HEK293 (cell line): ENCODE measurements at regions of chr16 and their contacts with region 1.

Region 1: DNA sequence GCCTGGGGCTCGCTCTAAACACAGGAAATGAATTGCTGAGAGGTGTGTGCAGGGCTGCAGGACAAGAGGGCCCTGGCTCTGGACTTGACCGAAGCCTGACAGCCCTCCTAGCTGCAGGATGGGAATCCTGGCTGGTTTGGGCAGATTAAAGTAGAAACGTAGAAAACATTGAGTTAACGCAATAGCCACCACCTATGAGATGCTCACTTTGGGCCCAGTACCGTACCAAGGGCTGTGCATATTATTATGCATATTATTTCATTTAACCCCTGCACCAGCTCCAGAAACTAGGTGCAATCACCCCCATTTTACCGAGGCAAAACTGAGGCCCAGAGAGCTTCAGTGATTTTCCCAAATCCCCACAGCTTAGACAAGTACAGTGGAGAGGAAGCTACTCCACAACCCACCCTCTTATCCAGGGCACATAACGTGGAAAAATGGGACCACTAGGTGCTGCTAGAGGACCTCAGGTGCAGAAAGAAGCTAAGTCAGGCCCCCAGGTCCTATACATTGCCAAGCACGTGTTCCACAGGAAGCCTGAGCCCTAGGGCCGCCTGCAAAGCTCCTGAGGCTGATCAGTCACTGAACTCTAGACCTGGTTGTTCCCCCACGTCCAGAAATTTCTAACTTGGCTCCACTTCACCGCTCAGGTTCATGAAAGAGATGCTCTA is 79.2 kb downstream of the MYH11 start:
- H3K4me3 ChIP-seq: no peak overlapping the region
- H3K27ac ChIP-seq: no peak overlapping the region
- H3K4me1 ChIP-seq: no peaks in the 10 kb centered on the region
- CTCF ChIP-seq: peak; percentile 89

Region 2: GRCh38 chr16:15415411-15416037 is 362.1 kb before region 1 on chr16:
- CTCF ChIA-PET with region 1: no interaction called
- POLR2A ChIA-PET with region 1: no interaction called
- H3K4me3 ChIP-seq: no peak overlapping the region
- H3K27ac ChIP-seq: no peak overlapping the region
- H3K4me1 ChIP-seq: no peaks in the 10 kb centered on the region
- CTCF ChIP-seq: no peak

Region 3: DNA sequence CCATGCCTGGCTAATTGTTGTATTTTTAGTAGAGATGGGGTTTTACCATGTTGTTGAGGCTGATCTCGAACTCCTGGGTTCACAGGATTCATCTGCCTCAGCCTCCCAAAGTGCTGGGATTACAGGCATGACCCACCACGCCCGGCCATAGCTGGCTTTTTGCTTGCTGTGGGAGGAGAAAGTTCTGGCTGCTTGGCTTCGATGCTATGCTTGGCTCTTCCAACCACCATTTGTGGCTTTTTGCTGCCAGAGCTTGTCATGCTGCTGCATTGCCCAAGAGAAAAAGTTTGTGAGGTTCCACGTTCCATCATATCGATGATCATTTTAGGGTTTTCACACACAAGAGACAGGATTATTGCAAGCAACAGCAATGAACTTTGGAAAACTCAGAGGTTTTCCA is 327.0 kb before region 1 on chr16:
- CTCF ChIA-PET with region 1: no interaction called
- POLR2A ChIA-PET with region 1: no interaction called
- H3K4me3 ChIP-seq: no peak overlapping the region
- H3K27ac ChIP-seq: no peak overlapping the region
- H3K4me1 ChIP-seq: no peaks in the 10 kb centered on the region
- CTCF ChIP-seq: no peak

Region 4: DNA sequence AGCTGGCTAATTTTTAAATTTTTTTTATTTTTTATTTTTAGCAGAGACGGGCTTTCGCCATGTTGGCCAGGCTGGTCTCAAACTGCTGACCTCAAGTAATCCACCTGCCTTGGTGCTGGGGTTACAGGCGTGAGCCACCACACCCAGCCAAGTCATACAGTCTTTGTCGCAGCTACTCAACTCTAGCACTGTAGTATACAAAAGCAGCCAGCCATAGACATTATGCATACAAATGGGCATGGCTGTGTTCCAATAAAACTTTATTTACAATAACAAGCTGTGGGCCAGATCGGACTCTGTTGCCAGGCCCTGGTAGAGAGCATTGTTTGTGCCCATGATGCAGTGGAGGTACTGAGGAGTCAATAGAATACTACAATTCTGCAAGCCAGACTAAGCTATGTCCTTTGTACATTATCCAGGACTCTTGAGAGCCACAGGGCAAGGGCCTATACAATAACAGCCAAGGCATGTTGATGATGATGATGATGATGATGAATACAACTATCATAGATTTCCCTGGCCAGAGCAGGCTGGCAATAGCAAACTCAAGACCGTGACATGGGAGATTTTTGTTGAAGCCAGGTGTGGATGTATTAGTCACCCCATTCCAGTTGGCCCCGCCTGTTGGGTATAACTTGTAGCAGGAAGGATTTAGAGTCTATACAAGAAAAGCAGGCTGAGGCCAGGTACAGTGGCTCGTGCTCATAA is 22.7 kb before region 1 on chr16:
- CTCF ChIA-PET with region 1: interaction called, 10 read pairs
- POLR2A ChIA-PET with region 1: no interaction called
- H3K4me3 ChIP-seq: no peak overlapping the region
- H3K27ac ChIP-seq: no peak overlapping the region
- H3K4me1 ChIP-seq: no peaks in the 10 kb centered on the region
- CTCF ChIP-seq: no peak

Region 5: GRCh38 chr16:15822957-15823356 is 45.3 kb after region 1 on chr16:
- CTCF ChIA-PET with region 1: interaction called, 59 read pairs
- POLR2A ChIA-PET with region 1: interaction called, 3 read pairs
- H3K4me3 ChIP-seq: no peak overlapping the region
- H3K27ac ChIP-seq: no peak overlapping the region
- H3K4me1 ChIP-seq: no peaks in the 10 kb centered on the region
- CTCF ChIP-seq: no peak

Region 6: GRCh38 chr16:15861996-15862395 is 84.3 kb after region 1 on chr16:
- CTCF ChIA-PET with region 1: no interaction called
- POLR2A ChIA-PET with region 1: no interaction called
- H3K4me3 ChIP-seq: no peak overlapping the region
- H3K27ac ChIP-seq: no peak overlapping the region
- H3K4me1 ChIP-seq: 0 out of 2 replicates have a peak, but pooled peaks cover 2% of the 10 kb centered on the region
- CTCF ChIP-seq: no peak

Region 7: GRCh38 chr16:15874745-15875314 is 97.2 kb after region 1 on chr16:
- CTCF ChIA-PET with region 1: interaction called, 11 read pairs
- POLR2A ChIA-PET with region 1: no interaction called
- H3K4me3 ChIP-seq: no peak overlapping the region
- H3K27ac ChIP-seq: no peak overlapping the region
- H3K4me1 ChIP-seq: no peaks in the 10 kb centered on the region
- CTCF ChIP-seq: peak; percentile 29; the same call in 1 of the 2 replicates

Region 8: DNA sequence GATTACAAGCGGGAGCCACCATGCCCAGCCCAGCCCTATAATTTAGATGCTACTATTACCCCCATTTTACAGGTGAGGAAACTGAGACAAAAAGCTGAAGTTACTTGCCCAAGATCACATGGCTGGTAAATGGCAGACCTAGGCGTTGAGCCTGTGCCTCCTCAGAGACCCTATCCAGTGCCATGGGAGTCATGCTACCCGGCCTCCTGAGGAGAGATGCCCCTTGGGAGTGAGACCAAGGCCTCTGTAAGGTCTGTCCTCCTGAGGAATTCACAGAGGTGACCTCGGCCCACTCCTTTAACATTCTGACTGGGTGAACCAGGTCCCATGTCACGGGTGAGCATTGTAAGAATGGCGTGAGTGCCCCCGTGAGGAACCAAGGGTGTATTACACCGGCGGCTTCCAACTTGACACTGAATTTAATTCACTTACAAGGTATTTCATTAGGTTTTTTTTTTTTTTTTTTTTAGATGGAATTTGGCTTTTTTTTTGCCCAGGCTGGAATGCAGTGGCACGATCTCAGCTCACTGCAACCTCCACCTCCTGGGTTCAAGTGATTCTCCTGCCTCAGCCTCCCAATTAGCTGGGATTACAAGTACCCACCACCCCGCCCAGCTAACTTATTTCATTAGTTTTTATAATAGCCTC is 349.9 kb after region 1 on chr16:
- CTCF ChIA-PET with region 1: interaction called, 11 read pairs
- POLR2A ChIA-PET with region 1: interaction called, 3 read pairs
- H3K4me3 ChIP-seq: no peak overlapping the region
- H3K27ac ChIP-seq: no peak overlapping the region
- H3K4me1 ChIP-seq: no peaks in the 10 kb centered on the region
- CTCF ChIP-seq: peak; percentile 66